Activated CD4-positive, alpha-beta memory T cell treated with anti-CD3 and anti-CD28 coated beads for 36 hours (primary cell): ENCODE measurements at regions of chr6 and their contacts with region 1.

Region 1: GRCh38 chr6:140586426-140587061 is 1212.1 kb upstream of the CITED2 start:
- DNase-seq: peak; percentile 50
- H3K4me3 Mint-ChIP-seq: no peak overlapping the region
- H3K27ac Mint-ChIP-seq: peak overlapping the region; percentile 49
- H3K4me1 Mint-ChIP-seq: peaks cover 28% of the 10 kb centered on the region
- H3K27me3 Mint-ChIP-seq: peaks cover 10% of the 10 kb centered on the region

Region 2: GRCh38 chr6:139515511-139515910 is 1071.0 kb before region 1 on chr6:
- CTCF ChIA-PET with region 1: no interaction called
- POLR2A ChIA-PET with region 1: no interaction called
- intact Hi-C with region 1: loop called (anchors 2 kb)
- DNase-seq: no peak
- H3K4me3 Mint-ChIP-seq: no peak overlapping the region
- H3K27ac Mint-ChIP-seq: peak overlapping the region; percentile 76
- H3K4me1 Mint-ChIP-seq: peaks cover 32% of the 10 kb centered on the region
- H3K27me3 Mint-ChIP-seq: no peaks in the 10 kb centered on the region

Region 3: GRCh38 chr6:140774080-140774505 is 187.5 kb after region 1 on chr6:
- CTCF ChIA-PET with region 1: no interaction called
- POLR2A ChIA-PET with region 1: no interaction called
- intact Hi-C with region 1: loop called (anchors 1 kb)
- DNase-seq: no peak
- H3K4me3 Mint-ChIP-seq: no peak overlapping the region
- H3K27ac Mint-ChIP-seq: no peak overlapping the region
- H3K4me1 Mint-ChIP-seq: peaks cover 12% of the 10 kb centered on the region
- H3K27me3 Mint-ChIP-seq: peaks cover 18% of the 10 kb centered on the region

Region 4: GRCh38 chr6:140809694-140810101 is 223.2 kb after region 1 on chr6:
- CTCF ChIA-PET with region 1: no interaction called
- POLR2A ChIA-PET with region 1: interaction called, 5 read pairs
- intact Hi-C with region 1: loop called (anchors 1 kb)
- DNase-seq: no peak
- H3K4me3 Mint-ChIP-seq: no peak overlapping the region
- H3K27ac Mint-ChIP-seq: no peak overlapping the region
- H3K4me1 Mint-ChIP-seq: peaks cover 7% of the 10 kb centered on the region
- H3K27me3 Mint-ChIP-seq: peaks cover 4% of the 10 kb centered on the region

Region 5: GRCh38 chr6:141326426-141326825 is 739.9 kb after region 1 on chr6:
- CTCF ChIA-PET with region 1: no interaction called
- POLR2A ChIA-PET with region 1: no interaction called
- intact Hi-C with region 1: loop called (anchors 1 kb)
- DNase-seq: peak; percentile 75
- H3K4me3 Mint-ChIP-seq: no peak overlapping the region
- H3K27ac Mint-ChIP-seq: no peak overlapping the region
- H3K4me1 Mint-ChIP-seq: peaks cover 17% of the 10 kb centered on the region
- H3K27me3 Mint-ChIP-seq: no peaks in the 10 kb centered on the region